ENCODE measurements at regions of chr2 and their contacts with region 1.

Region 1: DNA sequence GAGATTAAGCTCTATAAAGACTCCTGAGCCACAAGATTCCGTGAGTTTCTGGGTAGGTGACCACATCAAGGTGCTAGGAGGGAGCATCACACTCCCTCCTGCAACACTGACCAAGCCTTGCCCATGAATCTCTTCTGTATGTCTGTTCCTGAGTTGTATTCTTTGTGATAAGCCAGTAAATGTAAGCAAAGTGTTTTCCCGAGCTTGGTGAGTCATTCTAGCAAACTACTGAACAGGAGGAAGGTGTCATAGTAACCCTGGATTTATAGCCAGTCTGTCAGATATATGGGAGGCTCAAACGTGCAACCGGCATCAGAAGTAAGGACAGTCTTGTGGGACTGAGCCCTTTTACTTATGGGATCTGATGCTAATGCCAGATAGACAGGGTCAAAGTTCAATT is 346.1 kb upstream of the KYNU start:
- DNase-seq: no peak
- CTCF ChIP-seq: no peak

Region 2: GRCh38 chr2:142415461-142415860 is 115.9 kb before region 1 on chr2:
- CTCF ChIA-PET with region 1: no interaction called
- POLR2A ChIA-PET with region 1: no interaction called
- DNase-seq: no peak
- CTCF ChIP-seq: no peak

Region 3: GRCh38 chr2:142515493-142515892 is 15.9 kb before region 1 on chr2:
- CTCF ChIA-PET with region 1: interaction called, 11 read pairs
- POLR2A ChIA-PET with region 1: no interaction called
- DNase-seq: no peak
- CTCF ChIP-seq: no peak

Region 4: DNA sequence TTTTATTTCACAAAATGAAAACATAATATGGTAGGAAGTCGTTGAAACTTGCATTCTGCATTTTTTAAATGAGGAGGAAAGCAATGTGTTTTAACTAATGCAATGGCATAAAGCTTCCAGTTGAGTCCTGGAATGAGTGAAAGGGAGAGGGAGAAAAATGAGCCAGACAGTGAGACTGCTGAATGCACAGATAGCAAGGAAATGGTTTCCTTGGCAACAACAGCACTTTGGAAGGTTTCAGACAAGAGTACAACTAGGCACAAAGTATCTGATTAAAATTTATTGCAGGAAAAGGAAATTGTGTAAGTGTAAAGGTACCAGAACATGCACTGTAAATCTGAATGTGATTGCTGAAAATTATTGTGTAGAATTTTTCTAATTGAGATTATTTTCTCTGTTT is 26.0 kb after region 1 on chr2:
- CTCF ChIA-PET with region 1: no interaction called
- POLR2A ChIA-PET with region 1: no interaction called
- DNase-seq: no peak
- CTCF ChIP-seq: no peak

Region 5: GRCh38 chr2:142682528-142682927 is 151.2 kb after region 1 on chr2:
- CTCF ChIA-PET with region 1: no interaction called
- POLR2A ChIA-PET with region 1: no interaction called
- DNase-seq: no peak
- CTCF ChIP-seq: no peak